PC-3 (cell line): ENCODE measurements at regions of chrX and their contacts with region 1.

Region 1: GRCh38 chrX:108165383-108166111 is 74.0 kb downstream of the ATG4A start:
- DNase-seq: peak; percentile 55
- ATAC-seq: peak; percentile 50
- H3K4me3 ChIP-seq: no peak overlapping the region
- H3K27ac ChIP-seq: no peak overlapping the region
- H3K4me1 ChIP-seq: peaks cover 31% of the 10 kb centered on the region
- H3K27me3 ChIP-seq: no peaks in the 10 kb centered on the region
- CTCF ChIP-seq: peak; percentile 63

Region 2: DNA sequence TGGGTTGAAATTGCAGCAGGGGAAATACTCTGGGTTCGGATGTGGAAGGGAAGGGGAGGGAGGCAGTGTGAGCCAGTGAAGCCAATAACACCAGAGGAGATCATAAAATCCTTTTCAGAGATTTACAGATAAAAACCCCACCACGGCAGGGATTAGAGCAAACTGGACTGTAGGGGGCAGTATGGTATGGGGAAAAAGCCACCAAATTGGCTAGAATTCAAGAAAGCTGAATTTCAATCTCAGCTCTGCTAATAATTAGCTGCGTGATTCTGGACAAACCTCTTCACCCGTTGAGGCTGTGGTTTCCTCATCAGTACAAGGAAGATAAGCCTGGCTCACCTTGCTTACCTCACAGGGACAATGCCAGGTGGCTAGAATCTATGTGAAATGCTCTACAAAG is 34.1 kb after region 1 on chrX:
- CTCF ChIA-PET with region 1: no interaction called
- POLR2A ChIA-PET with region 1: no interaction called
- intact Hi-C with region 1: loop called (anchors 1 kb)
- DNase-seq: peak; percentile 77
- ATAC-seq: peak; percentile 72
- H3K4me3 ChIP-seq: no peak overlapping the region
- H3K27ac ChIP-seq: no peak overlapping the region
- H3K4me1 ChIP-seq: peaks cover 13% of the 10 kb centered on the region
- H3K27me3 ChIP-seq: no peaks in the 10 kb centered on the region
- CTCF ChIP-seq: peak; percentile 84